Activated CD8-positive, alpha-beta T cell treated with anti-CD3 and anti-CD28 coated beads, Interleukin-2, amount 10 ng/mL, durations not matched to agents 7 days and 5 days (primary cell): ENCODE measurements at regions of chr4 and their contacts with region 1.

Region 1: DNA sequence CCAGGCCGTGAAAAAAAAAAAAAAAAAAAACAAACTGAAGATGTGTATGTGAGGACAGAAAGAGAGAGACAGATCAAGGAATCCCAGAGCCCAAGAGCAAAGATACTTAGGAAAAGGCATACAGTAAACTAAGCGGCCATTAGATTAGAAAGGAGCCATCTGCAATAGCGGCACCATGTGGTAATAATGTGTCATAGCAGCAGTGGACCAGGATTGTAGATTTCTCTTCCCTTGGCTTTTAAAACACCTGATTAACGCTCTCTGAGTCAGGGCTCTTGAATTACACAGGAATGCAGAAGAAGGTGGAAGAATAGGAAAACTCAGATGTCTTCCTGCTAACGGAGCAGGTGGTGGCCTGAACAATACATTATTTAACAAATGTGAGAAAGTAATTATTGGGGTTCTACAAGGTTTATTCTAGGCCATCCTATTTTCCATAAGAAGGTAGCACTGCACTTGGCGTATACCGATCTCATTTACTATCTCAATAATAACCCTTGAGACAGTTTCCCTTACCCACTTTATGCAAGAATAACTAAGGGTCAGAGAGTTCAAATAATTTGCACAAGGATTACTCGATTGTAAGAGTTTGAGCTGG is 182.7 kb downstream of the KCNIP4 start:
- DNase-seq: peak; percentile 37
- ATAC-seq: no peak
- H3K4me3 Mint-ChIP-seq: no peak overlapping the region
- H3K27ac Mint-ChIP-seq: no peak overlapping the region
- H3K4me1 Mint-ChIP-seq: peaks cover 8% of the 10 kb centered on the region
- H3K27me3 Mint-ChIP-seq: no peaks in the 10 kb centered on the region

Region 2: GRCh38 chr4:20773144-20773997 is 992.5 kb before region 1 on chr4:
- CTCF ChIA-PET with region 1: interaction called, 15 read pairs
- POLR2A ChIA-PET with region 1: no interaction called
- DNase-seq: peak; percentile 42
- ATAC-seq: peak; percentile 57
- H3K4me3 Mint-ChIP-seq: no peak overlapping the region
- H3K27ac Mint-ChIP-seq: no peak overlapping the region
- H3K4me1 Mint-ChIP-seq: no peaks in the 10 kb centered on the region
- H3K27me3 Mint-ChIP-seq: peaks cover 2% of the 10 kb centered on the region

Region 3: GRCh38 chr4:21726255-21726815 is 39.6 kb before region 1 on chr4:
- CTCF ChIA-PET with region 1: no interaction called
- POLR2A ChIA-PET with region 1: no interaction called
- DNase-seq: no peak
- ATAC-seq: no peak
- H3K4me3 Mint-ChIP-seq: no peak overlapping the region
- H3K27ac Mint-ChIP-seq: no peak overlapping the region
- H3K4me1 Mint-ChIP-seq: no peaks in the 10 kb centered on the region
- H3K27me3 Mint-ChIP-seq: no peaks in the 10 kb centered on the region

Region 4: GRCh38 chr4:21790438-21791029 is 24.6 kb after region 1 on chr4:
- CTCF ChIA-PET with region 1: interaction called, 14 read pairs
- POLR2A ChIA-PET with region 1: no interaction called
- DNase-seq: no peak
- ATAC-seq: no peak
- H3K4me3 Mint-ChIP-seq: no peak overlapping the region
- H3K27ac Mint-ChIP-seq: no peak overlapping the region
- H3K4me1 Mint-ChIP-seq: peaks cover 3% of the 10 kb centered on the region
- H3K27me3 Mint-ChIP-seq: no peaks in the 10 kb centered on the region